ENCODE measurements at regions of chr4 and their contacts with region 1.

Region 1: GRCh38 chr4:103008875-103009729 is 10.4 kb downstream of the SLC9B1 start:
- DNase-seq: peak; percentile 46
- ATAC-seq: peak; percentile 96
- H3K4me3 ChIP-seq: no peak overlapping the region
- H3K27ac ChIP-seq: no peak overlapping the region
- H3K4me1 ChIP-seq: no peaks in the 10 kb centered on the region
- H3K27me3 ChIP-seq: no peaks in the 10 kb centered on the region
- CTCF ChIP-seq: peak; percentile 59 to 82 (median 64)
- EP300 ChIP-seq: no peak
- POLR2A ChIP-seq: no peak
- RAD21 ChIP-seq: peak; percentile 97

Region 2: DNA sequence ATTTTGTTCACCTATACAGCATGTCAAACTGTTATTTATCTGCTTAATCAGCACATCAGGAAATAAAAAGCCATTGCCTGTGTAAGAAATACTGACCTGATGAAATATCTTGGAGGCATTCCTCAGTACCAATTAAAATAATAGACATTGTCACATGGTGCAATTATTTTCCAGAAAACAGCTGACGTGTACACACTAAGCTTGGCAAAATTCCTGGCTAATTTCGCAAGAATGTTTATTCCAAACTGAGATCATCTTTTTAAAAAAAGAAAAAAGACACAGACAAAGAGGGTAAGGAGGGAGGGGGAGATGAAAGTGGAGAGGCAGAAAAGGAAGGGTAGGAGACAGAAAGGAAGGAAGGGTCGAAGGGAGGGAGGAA is 569.9 kb before region 1 on chr4:
- CTCF ChIA-PET with region 1: no interaction called
- POLR2A ChIA-PET with region 1: no interaction called
- RAD21 ChIA-PET with region 1: no interaction called
- SMC1A ChIA-PET with region 1: no interaction called
- in situ Hi-C with region 1: loop called (anchors 10 kb)
- intact Hi-C with region 1: loop called (anchors 5 kb)
- DNase-seq: no peak
- ATAC-seq: no peak
- H3K4me3 ChIP-seq: no peak overlapping the region
- H3K27ac ChIP-seq: no peak overlapping the region
- H3K4me1 ChIP-seq: no peaks in the 10 kb centered on the region
- H3K27me3 ChIP-seq: no peaks in the 10 kb centered on the region
- CTCF ChIP-seq: no peak
- EP300 ChIP-seq: no peak
- POLR2A ChIP-seq: no peak
- RAD21 ChIP-seq: no peak

Region 3: GRCh38 chr4:102735582-102735981 is 273.5 kb before region 1 on chr4:
- CTCF ChIA-PET with region 1: no interaction called
- POLR2A ChIA-PET with region 1: no interaction called
- RAD21 ChIA-PET with region 1: interaction called, 10 read pairs
- SMC1A ChIA-PET with region 1: no interaction called
- in situ Hi-C with region 1: no loop called
- intact Hi-C with region 1: no loop called
- DNase-seq: no peak
- ATAC-seq: no peak
- H3K4me3 ChIP-seq: no peak overlapping the region
- H3K27ac ChIP-seq: peak overlapping the region; percentile 52; the same call in 1 of the 2 replicates
- H3K4me1 ChIP-seq: peaks cover 14% of the 10 kb centered on the region
- H3K27me3 ChIP-seq: no peaks in the 10 kb centered on the region
- CTCF ChIP-seq: no peak
- EP300 ChIP-seq: no peak
- POLR2A ChIP-seq: no peak
- RAD21 ChIP-seq: no peak

Region 4: DNA sequence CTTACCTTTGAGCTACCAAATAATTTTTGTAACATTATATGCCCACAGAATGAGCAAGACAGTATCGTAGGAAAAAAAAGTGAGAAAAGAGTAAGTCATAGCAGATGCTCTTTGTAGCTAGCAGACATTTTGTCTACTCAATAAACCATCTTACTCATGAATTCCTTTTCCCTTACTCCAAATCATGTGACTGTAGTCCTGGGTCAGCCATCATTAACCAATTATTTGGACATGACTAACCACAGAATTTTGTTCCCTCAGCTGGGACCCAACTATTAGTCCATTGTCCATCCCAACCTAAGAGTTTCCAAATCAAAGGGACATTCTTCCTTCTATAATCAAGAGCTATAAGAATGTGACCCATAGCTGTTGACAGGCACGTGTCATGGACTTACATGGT is 193.1 kb before region 1 on chr4:
- CTCF ChIA-PET with region 1: interaction called, 6 read pairs
- POLR2A ChIA-PET with region 1: no interaction called
- RAD21 ChIA-PET with region 1: interaction called, 3 read pairs
- SMC1A ChIA-PET with region 1: interaction called, 13 read pairs
- in situ Hi-C with region 1: loop called (anchors 25 kb)
- intact Hi-C with region 1: loop called (anchors 5 kb)
- DNase-seq: no peak
- ATAC-seq: no peak
- H3K4me3 ChIP-seq: no peak overlapping the region; the same call in 1 of the 2 replicates
- H3K27ac ChIP-seq: no peak overlapping the region
- H3K4me1 ChIP-seq: peaks cover 5% of the 10 kb centered on the region
- H3K27me3 ChIP-seq: no peaks in the 10 kb centered on the region
- CTCF ChIP-seq: no peak
- EP300 ChIP-seq: no peak
- POLR2A ChIP-seq: no peak
- RAD21 ChIP-seq: no peak

Region 5: DNA sequence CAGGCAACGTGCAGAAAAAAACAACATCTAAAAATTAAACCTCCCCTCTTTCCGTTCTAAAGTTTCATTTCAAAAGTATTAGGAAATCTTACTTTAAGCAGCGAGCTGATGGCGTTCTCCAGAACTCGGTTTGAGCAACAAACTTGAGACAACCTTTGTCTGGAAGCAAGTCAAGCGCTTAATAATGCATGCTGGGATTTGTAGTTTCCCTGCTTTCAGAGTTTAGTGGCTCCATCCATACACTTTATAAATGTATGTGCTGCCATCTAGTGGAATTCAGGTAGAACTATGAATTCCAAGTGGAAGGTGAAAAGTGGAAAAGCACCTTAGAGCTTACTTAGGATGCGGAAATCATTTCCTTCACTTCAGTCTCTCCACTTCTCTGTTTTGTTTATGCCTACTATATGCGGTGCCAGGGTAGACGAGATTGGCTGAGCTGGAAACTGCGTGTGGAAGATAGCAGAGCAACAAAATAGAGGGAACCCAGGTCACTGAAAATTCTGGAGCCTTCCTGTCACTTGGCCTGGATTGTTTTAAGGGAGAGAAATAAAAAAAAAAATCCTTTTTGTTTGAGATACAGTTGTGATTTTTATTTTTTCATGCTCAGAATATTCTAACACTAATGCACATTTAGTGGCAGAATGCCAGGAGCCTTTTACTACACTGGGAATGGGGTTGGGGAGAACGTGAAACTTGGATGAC is 90.7 kb after region 1 on chr4 and contains the start of gene BDH2:
- CTCF ChIA-PET with region 1: interaction called, 62 read pairs
- POLR2A ChIA-PET with region 1: no interaction called
- RAD21 ChIA-PET with region 1: interaction called, 10 read pairs
- SMC1A ChIA-PET with region 1: interaction called, 8 read pairs
- in situ Hi-C with region 1: no loop called
- intact Hi-C with region 1: no loop called
- DNase-seq: peak; percentile 72
- ATAC-seq: peak; percentile 97
- H3K4me3 ChIP-seq: peak within 1 kb of the TSS; percentile 74
- H3K27ac ChIP-seq: peak within 1 kb of the TSS; percentile 57; the same call in 1 of the 2 replicates
- H3K4me1 ChIP-seq: peaks cover 4% of the 10 kb centered on the region; the same call in 1 of the 2 replicates
- H3K27me3 ChIP-seq: no peaks in the 10 kb centered on the region
- CTCF ChIP-seq: peak; percentile 57 to 86 (median 71); a peak in 5 of 6 replicates
- EP300 ChIP-seq: no peak
- POLR2A ChIP-seq: 0 out of 2 replicates have a peak, but pooled peaks have one; percentile 35
- RAD21 ChIP-seq: peak; percentile 81
- polyA plus RNA-seq, gene BDH2: 41.0 to 47.3 TPM

Measured in GM12878 (cell line).